ENCODE measurements at regions of chr10 and their contacts with region 1.

Region 1: GRCh38 chr10:50417886-50418830 is 166.8 kb upstream of the ASAH2 start:
- DNase-seq: peak; percentile 55
- ATAC-seq: peak; percentile 77
- H3K4me3 ChIP-seq: peak overlapping the region; percentile 55 to 78 (median 71)
- H3K4me3 Mint-ChIP-seq: peak overlapping the region; percentile 93
- H3K27ac ChIP-seq: peak overlapping the region in 1 of 2 donors; percentile 8
- H3K27ac Mint-ChIP-seq: peak overlapping the region; percentile 79
- H3K4me1 ChIP-seq: peaks cover 17 to 26% of the 10 kb centered on the region in 2 donors
- H3K4me1 Mint-ChIP-seq: peaks cover 57% of the 10 kb centered on the region
- H3K27me3 ChIP-seq: no peaks in the 10 kb centered on the region
- H3K27me3 Mint-ChIP-seq: no peaks in the 10 kb centered on the region
- CTCF ChIP-seq: no peak

Region 2: DNA sequence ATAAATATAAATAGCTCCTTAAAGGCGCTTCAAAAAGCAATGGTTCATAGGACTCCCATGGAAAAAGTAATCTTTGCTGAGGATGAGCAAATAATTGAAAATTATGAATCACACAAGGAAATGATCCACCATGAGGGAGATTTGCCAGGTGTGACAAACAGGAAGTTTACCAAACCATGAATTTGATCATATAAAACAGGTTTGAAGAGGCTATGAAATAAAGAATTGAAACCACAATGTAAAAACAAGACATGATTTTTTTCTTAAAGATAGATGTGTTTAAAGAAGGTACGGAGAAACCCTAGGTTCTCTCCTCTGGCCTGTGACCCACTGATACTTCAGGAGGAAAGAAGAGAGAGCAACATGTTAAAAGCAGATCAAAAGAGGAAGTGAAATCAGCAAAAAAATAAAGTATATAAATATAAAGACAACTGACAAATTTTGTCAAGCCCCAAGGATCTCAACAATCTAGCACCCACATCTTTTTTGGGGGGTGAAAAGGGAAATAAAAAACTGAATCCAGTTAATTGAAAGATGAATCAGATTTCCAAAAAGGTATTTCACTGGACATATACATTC is 55.5 kb before region 1 on chr10:
- CTCF ChIA-PET with region 1: interaction called, 4 read pairs
- POLR2A ChIA-PET with region 1: no interaction called
- intact Hi-C with region 1: loop called (anchors 2 kb)
- DNase-seq: peak; percentile 85
- ATAC-seq: peak; percentile 93
- H3K4me3 ChIP-seq: peak overlapping the region in 1 of 5 experiments; percentile 40
- H3K4me3 Mint-ChIP-seq: peak overlapping the region; percentile 6
- H3K27ac ChIP-seq: peak overlapping the region; percentile 84 to 95
- H3K27ac Mint-ChIP-seq: peak overlapping the region; percentile 89
- H3K4me1 ChIP-seq: peaks cover 43 to 44% of the 10 kb centered on the region in 2 donors
- H3K4me1 Mint-ChIP-seq: peaks cover 57% of the 10 kb centered on the region
- H3K27me3 ChIP-seq: no peaks in the 10 kb centered on the region
- H3K27me3 Mint-ChIP-seq: no peaks in the 10 kb centered on the region
- CTCF ChIP-seq: no peak

Region 3: DNA sequence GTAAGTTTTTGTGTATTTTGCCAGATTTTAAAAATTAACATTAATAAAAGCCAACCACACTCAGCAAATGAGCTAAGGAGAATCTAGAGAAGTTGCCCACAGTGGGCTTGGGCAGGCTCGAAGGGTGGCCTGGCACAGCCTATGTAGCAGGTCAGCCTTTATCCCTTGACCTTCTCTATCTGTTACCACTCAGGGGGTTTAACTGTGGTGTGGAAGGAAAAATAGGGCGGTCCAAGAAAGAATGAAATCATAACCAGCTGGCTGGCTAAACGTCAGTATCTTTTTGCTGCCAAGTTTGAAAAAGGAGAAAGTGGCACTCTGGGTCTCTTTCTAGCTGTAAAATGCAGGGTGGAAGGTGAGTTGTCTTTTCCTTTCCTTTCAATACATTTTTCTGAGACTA is 36.5 kb before region 1 on chr10:
- CTCF ChIA-PET with region 1: no interaction called
- POLR2A ChIA-PET with region 1: no interaction called
- intact Hi-C with region 1: loop called (anchors 5 kb)
- DNase-seq: no peak
- ATAC-seq: no peak
- H3K4me3 ChIP-seq: no peak overlapping the region
- H3K4me3 Mint-ChIP-seq: no peak overlapping the region
- H3K27ac ChIP-seq: no peak overlapping the region
- H3K27ac Mint-ChIP-seq: no peak overlapping the region
- H3K4me1 ChIP-seq: peaks cover 9 to 15% of the 10 kb centered on the region in 2 donors
- H3K4me1 Mint-ChIP-seq: peaks cover 48% of the 10 kb centered on the region
- H3K27me3 ChIP-seq: no peaks in the 10 kb centered on the region
- H3K27me3 Mint-ChIP-seq: no peaks in the 10 kb centered on the region
- CTCF ChIP-seq: no peak

Region 4: GRCh38 chr10:50514995-50515394 is 96.8 kb after region 1 on chr10:
- CTCF ChIA-PET with region 1: no interaction called
- POLR2A ChIA-PET with region 1: no interaction called
- intact Hi-C with region 1: no loop called
- DNase-seq: no peak
- ATAC-seq: no peak
- H3K4me3 ChIP-seq: no peak overlapping the region
- H3K4me3 Mint-ChIP-seq: no peak overlapping the region
- H3K27ac ChIP-seq: no peak overlapping the region
- H3K27ac Mint-ChIP-seq: no peak overlapping the region
- H3K4me1 ChIP-seq: peaks cover 17% of the 10 kb centered on the region in 2 donors
- H3K4me1 Mint-ChIP-seq: peaks cover 31% of the 10 kb centered on the region
- H3K27me3 ChIP-seq: no peaks in the 10 kb centered on the region
- H3K27me3 Mint-ChIP-seq: no peaks in the 10 kb centered on the region
- CTCF ChIP-seq: no peak